Activated CD4-positive, alpha-beta T cell treated with anti-CD3 and anti-CD28 coated beads, Interleukin-2, amount 10 ng/mL, durations not matched to agents 24 days and 14 days (primary cell): ENCODE measurements at regions of chrX and their contacts with region 1.

Region 1: DNA sequence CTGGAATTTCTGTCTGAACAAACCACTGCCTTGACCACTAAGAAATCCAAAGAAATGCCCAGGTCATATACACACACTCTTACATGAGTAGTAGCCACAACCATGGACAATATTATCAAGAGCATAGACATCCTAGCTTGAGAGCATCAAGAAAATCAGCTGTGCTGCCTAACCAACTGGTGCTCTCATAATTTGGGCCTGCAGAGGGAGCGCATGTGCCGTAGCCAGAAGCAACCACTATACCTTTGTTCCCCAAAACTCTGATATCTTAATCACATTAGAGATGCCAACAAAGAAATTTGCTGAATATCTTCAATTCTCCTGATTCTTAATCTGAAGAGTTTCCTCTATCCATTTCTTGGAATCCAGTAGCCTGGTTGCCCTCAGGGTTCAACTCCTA is 163.6 kb downstream of the ZNF674 start:
- DNase-seq: peak; percentile 78
- H3K4me3 Mint-ChIP-seq: no peak overlapping the region
- H3K27ac Mint-ChIP-seq: no peak overlapping the region
- H3K4me1 Mint-ChIP-seq: no peaks in the 10 kb centered on the region
- H3K27me3 Mint-ChIP-seq: peaks cover 10% of the 10 kb centered on the region

Region 2: GRCh38 chrX:46686003-46686645 is 304.5 kb after region 1 on chrX:
- intact Hi-C with region 1: loop called (anchors 5 kb)
- DNase-seq: peak; percentile 79
- H3K4me3 Mint-ChIP-seq: no peak overlapping the region
- H3K27ac Mint-ChIP-seq: no peak overlapping the region
- H3K4me1 Mint-ChIP-seq: peaks cover 19% of the 10 kb centered on the region
- H3K27me3 Mint-ChIP-seq: no peaks in the 10 kb centered on the region